AG04449 (cell line): ENCODE measurements at regions of chr3 and their contacts with region 1.

Region 1: DNA sequence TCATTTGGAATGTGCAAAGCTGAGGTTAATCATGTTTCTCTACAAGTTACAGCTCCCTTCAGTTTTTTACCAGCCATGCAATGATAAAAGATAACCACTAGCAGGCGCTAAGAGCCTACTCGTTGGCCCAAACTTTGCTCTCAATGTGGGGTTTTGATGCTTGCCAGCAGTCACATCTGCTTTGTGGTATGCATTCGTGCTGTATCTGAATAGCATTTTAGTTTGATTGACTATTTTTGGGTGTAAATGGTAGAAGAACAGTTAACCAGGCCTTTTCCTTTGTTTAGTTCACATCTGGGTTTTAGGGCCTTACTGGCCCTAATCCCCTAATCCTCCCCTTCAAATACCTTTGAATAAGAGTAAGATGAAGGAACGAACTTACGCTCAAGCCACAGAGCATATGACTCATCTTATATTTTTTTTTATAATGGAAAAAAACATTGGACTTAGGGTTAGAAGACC is 4.4 kb upstream of the CLDN11 start:
- DNase-seq: peak; percentile 72
- H3K4me3 ChIP-seq: no peak overlapping the region
- CTCF ChIP-seq: peak; percentile 83

Region 2: DNA sequence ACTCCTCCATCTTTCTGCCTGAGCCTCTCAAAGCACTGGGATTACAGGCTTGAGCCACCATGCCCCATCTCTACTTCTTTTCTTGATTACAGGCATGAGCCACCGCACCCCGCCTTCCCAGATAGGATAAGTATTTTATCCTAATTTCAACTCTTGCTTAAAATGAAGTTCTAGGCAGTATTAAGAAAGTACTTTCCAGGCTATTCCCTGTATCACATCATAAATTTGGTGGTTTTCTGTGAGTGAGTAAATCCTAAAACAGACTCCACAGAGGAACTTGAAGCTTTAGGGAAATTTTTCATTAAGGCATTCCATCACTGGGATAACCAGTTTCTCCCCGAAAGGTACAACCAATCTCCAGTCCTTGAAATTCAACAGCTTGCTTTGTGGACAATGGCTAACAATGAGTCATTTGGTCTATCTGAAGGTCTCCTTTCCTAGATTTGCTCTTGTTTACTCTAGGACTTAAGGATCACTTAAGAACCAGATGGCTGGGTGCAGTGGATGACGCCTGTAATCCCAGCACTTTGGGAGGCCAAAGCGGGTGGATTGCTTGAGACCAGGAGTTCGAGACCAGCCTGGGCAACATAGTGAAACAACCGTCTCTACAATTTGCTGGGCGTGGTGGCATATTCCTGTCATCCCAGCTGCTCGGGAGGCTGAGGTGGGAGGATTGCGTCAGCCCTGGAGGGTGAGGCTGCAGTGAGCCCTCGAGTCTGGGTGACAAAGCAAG is 106.4 kb before region 1 on chr3:
- CTCF ChIA-PET with region 1: interaction called, 86 read pairs
- POLR2A ChIA-PET with region 1: no interaction called
- DNase-seq: no peak
- H3K4me3 ChIP-seq: no peak overlapping the region
- CTCF ChIP-seq: no peak

Region 3: DNA sequence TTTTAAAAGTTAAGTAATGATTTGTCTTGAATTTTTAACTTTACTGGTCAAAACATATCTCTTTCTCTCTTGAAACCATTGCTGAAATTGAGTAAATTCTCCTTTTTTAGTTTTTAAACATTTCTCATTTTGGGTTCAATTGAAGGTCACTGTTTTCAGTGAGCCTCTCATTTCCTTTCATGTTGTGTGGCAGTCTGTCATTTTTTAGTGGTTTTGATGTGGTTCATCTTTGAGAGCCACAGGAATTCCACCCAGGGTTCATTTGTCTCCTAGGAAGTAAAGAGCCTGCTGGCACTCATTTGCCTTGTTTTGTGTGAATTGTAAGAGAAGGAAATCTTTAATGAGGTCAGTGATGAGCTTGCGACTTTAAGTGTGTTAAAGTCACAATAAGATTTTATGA is 14.8 kb after region 1 on chr3:
- CTCF ChIA-PET with region 1: interaction called, 10 read pairs
- POLR2A ChIA-PET with region 1: no interaction called
- DNase-seq: no peak
- H3K4me3 ChIP-seq: no peak overlapping the region
- CTCF ChIP-seq: no peak

Region 4: DNA sequence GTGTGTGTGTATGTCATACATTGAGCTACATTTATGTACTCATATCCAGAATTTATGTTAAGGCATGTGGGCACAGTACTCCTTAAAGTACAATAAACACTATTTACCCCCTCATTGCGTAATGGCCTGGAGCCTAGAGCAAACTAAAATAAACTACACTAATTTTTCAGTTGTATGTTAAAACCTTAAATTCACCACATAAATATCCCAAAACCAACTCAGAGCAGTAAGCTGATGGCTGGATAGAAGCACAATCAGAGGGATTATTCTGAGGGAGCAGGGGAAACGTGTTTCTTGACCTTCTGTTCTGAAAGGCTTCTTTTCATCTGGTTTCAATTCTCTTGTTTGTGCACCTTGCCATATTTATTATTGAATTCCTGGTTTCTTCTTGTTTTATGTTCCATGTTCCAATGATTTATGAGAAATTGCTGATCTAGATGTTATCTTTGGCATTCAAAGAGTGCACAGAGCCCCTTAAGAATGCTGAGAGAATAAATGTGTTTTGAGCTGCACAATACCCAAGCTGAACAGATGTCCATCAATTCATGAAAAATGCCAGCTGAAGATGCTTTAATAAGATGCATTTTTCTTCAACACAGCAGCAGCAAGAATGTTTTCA is 426.1 kb after region 1 on chr3:
- CTCF ChIA-PET with region 1: interaction called, 38 read pairs
- POLR2A ChIA-PET with region 1: no interaction called
- DNase-seq: no peak
- H3K4me3 ChIP-seq: no peak overlapping the region
- CTCF ChIP-seq: no peak

Region 5: GRCh38 chr3:170862618-170863374 is 448.6 kb after region 1 on chr3:
- CTCF ChIA-PET with region 1: interaction called, 11 read pairs
- POLR2A ChIA-PET with region 1: interaction called, 4 read pairs
- DNase-seq: no peak
- H3K4me3 ChIP-seq: no peak overlapping the region
- CTCF ChIP-seq: no peak